Body of pancreas (tissue), 4 donors: ENCODE measurements at regions of chr2 and their contacts with region 1.

Region 1: GRCh38 chr2:232600053-232600773 is 33.2 kb upstream of the EFHD1 start:
- DNase-seq: peak in 2 of 4 donors; percentile 34 to 42
- ATAC-seq: no peak
- H3K4me3 ChIP-seq: no peak overlapping the region
- H3K27ac ChIP-seq: no peak overlapping the region
- H3K4me1 ChIP-seq: no peaks in the 10 kb centered on the region
- H3K27me3 ChIP-seq: no peaks in the 10 kb centered on the region
- CTCF ChIP-seq: no peak
- POLR2A ChIP-seq: no peak

Region 2: DNA sequence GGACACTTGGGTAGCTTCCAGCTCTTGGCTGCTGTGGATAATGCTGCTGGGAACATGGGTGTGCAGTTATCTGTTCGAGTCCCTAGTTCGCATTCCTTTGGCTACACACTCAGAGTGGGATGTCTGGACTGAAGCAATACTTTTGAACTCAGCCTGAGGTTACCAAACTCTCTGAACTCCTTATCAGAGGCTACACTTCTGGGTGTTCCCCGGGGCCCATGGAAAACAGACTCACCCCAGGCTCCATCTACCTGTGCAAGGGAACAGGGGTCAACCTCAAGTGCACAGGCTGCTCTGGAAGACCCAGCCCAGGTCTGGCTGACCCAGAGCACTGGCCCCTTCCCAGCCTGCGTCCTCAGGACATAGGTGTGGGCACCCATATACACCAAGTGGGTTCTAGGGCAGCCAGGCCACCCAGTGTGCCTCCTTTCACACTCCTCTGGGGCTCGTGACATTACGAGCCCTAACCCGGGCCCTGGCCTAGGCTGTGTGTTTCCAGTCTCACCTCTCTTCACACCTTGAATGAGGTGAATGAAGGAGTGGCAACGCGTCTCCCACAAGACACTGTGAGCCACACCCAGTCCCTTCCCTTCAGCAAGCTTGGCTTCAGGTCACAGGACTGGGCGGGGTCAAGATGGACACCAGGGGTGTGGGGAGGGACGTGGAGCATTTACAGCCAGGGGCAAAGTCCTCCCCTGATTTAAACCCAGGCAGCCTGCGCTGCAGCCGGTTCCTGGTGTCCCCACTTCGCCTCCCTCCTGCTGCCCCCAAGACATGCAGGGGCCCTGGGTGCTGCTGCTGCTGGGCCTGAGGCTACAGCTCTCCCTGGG is 144.6 kb before region 1 on chr2 and contains the start of gene ALPI:
- intact Hi-C with region 1: no loop called
- DNase-seq: no peak
- ATAC-seq: no peak
- H3K4me3 ChIP-seq: no peak within 1 kb of the TSS
- H3K27ac ChIP-seq: no peak within 1 kb of the TSS
- H3K4me1 ChIP-seq: no peaks in the 10 kb centered on the region
- H3K27me3 ChIP-seq: peaks cover 0 to 5% of the 10 kb centered on the region in 2 donors
- CTCF ChIP-seq: no peak
- POLR2A ChIP-seq: no peak
- total RNA-seq, gene ALPI: not detected

Region 3: DNA sequence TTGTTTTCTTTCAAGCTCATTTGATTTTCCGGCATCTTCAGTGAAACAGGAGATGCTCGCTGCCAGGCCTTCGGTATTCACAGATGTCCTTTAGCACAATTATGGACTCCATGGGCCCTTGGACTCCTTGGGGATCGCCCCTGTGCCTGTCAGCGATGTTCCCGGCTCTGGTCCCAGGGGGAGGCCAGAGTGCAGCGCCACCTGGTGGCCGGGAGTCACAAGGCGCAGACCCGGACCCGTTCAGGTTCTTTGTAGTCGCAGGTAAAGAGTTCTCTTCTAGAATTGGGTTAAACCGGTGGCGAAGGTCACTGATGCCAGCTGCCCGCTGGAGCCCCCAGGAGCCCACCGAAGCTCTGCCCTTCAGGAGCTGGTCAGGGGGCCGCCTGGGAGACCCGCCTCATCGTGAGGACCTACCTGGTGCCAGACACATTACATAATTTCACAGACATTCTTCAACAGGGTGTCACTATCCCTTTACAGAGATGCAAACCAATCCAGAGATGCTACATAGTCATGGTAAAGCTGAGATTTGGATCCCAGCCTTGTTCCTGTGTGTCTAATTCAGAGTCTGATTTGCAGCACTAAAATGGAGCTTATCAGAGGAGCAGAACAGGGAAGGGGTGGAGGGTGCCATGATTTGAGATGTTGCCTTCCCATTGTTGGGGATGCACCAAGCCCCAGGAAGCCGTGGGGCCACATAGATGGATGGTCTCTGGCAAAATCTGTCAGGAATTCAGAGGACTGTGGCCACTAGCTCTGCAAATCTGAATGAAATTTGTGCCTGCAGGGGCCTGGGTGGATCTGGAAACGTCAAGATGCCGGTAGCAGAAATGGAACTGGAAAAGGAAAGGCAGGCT is 453.9 kb after region 1 on chr2:
- intact Hi-C with region 1: loop called (anchors 10 kb)
- DNase-seq: peak; percentile 56 to 73 (median 66)
- ATAC-seq: peak; percentile 56
- H3K4me3 ChIP-seq: no peak overlapping the region
- H3K27ac ChIP-seq: no peak overlapping the region
- H3K4me1 ChIP-seq: peaks cover 5% of the 10 kb centered on the region
- H3K27me3 ChIP-seq: no peaks in the 10 kb centered on the region
- CTCF ChIP-seq: peak; percentile 71 to 95 (median 78)
- POLR2A ChIP-seq: no peak